ENCODE measurements at regions of chr1 and their contacts with region 1.

Region 1: GRCh38 chr1:23496490-23497181 is 12.7 kb upstream of the ASAP3 start:
- DNase-seq: no peak
- ATAC-seq: peak in 6 of 8 donors; percentile 18 to 40 (median 30)
- H3K4me3 ChIP-seq: no peak overlapping the region
- H3K27ac ChIP-seq: no peak overlapping the region
- H3K4me1 ChIP-seq: peaks cover 0 to 9% (median 0%) of the 10 kb centered on the region in 9 donors
- H3K27me3 ChIP-seq: no peaks in the 10 kb centered on the region
- CTCF ChIP-seq: no peak

Region 2: GRCh38 chr1:23539698-23540266 is 43.1 kb after region 1 on chr1:
- intact Hi-C with region 1: loop called in 9 of 10 experiments (anchors 1 to 5 kb)
- DNase-seq: peak; percentile 80 to 86
- ATAC-seq: peak; percentile 76 to 91 (median 88)
- H3K4me3 ChIP-seq: peak overlapping the region in 6 of 10 donors; percentile 1 to 22 (median 9)
- H3K27ac ChIP-seq: peak overlapping the region in 2 of 10 donors; percentile 34 to 40
- H3K4me1 ChIP-seq: peaks cover 0 to 22% (median 9%) of the 10 kb centered on the region in 9 donors
- H3K27me3 ChIP-seq: no peaks in the 10 kb centered on the region
- CTCF ChIP-seq: peak; percentile 70 to 96 (median 92)

Region 3: DNA sequence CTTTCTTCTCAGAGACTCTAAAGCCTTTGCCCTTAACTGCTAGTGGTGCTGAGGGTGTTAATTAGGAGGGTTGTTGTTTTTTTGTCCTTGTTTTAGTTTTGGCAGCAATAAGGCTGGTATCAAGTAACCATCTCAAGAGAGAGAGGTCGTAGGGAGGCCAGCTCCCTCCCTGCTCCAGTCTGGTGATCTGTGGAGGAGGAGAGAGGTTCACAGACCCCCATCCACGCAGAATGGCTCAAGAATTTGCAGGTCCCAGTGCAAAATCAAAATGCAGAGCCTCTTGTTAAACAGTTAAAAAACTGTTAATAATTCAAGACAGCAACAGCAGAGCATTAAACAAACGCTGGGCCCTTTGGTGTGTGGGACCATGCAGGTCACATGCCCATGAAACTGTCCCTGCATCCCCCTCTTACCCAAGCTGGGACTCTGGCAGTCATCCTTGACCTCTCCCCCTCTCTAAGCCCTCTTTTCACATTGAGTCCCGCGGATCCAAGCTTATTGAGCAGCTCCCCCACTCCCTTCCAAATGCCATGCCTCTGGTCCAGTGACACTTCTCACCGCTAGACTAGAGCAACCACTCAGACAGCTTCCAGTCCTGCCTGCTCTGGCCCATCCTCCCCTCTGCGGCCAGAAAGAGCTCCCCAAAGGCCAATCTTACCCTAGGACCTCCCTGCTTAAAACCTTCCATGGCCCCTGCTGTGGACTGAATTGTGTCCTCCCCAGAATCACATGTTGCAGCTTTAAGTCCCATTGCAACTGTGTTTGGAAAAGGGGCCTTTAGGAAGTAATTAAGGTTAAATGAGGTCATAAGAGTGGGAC is 147.3 kb after region 1 on chr1:
- intact Hi-C with region 1: loop called in 5 of 10 experiments (anchors 5 kb)
- DNase-seq: no peak
- ATAC-seq: peak in 3 of 8 donors; percentile 15 to 69 (median 19)
- H3K4me3 ChIP-seq: no peak overlapping the region
- H3K27ac ChIP-seq: no peak overlapping the region
- H3K4me1 ChIP-seq: peaks cover 0 to 16% (median 0%) of the 10 kb centered on the region in 9 donors
- H3K27me3 ChIP-seq: peaks cover 0 to 3% (median 0%) of the 10 kb centered on the region in 7 donors
- CTCF ChIP-seq: no peak

Measured in heart right ventricle (tissue), 16 donors.